ENCODE measurements at regions of chr4 and their contacts with region 1.

Region 1: GRCh38 chr4:5050520-5051277 is 581 bp upstream of the STK32B start:
- DNase-seq: no peak
- H3K4me3 ChIP-seq: peak overlapping the region; percentile 65
- CTCF ChIP-seq: peak; percentile 86

Region 2: GRCh38 chr4:4859390-4859842 is 191.3 kb before region 1 on chr4 and contains the start of gene MSX1:
- CTCF ChIA-PET with region 1: no interaction called
- POLR2A ChIA-PET with region 1: no interaction called
- DNase-seq: no peak
- H3K4me3 ChIP-seq: peak within 1 kb of the TSS; percentile 70
- CTCF ChIP-seq: no peak

Region 3: DNA sequence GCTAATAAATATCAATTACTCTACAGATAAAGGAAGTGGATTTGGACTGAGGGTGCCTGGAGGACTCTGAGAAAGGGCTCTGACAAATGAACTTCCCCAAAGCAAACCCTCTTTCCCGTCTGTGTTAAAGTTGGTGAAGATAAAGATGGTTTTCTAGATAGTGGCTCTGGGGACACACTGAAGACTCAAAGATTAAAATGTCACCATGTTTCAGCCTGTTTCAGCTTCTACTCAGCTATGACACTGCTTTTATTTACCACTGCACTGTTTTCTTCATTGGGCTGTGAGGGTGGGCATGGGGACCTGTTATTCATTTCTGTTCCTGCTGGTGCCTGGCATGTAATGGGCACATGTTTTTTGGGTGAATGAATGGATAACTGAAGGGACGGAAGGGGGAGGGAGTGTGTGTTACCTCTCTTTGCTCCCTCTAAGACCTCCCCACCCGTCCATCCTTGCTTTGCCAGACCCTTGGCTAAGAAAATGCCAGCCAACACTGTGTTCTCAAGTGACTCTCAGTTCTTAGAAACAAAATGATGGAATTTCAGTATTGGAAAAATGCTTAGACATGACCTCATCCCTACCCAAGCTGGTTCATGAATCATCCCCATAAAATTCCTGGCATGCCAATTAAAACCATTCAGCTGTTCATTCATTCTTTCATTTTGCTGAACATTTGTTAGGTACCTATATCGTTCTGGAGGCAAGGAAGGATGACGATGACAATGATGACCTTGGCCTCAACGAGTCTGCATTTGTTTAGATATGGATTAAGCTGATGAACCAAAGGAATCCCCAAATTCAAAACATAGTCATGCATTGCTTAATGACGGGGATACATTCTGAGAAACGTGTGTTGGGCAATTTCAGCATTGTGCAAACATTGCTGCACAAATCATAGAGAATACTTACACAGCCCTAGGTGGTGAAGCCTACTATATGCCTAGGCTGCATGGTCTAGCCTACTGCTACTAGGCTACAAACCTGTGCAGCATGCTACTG is 12.8 kb before region 1 on chr4:
- CTCF ChIA-PET with region 1: interaction called, 19 read pairs
- POLR2A ChIA-PET with region 1: interaction called, 4 read pairs
- DNase-seq: peak; percentile 96
- H3K4me3 ChIP-seq: no peak overlapping the region
- CTCF ChIP-seq: no peak

Region 4: DNA sequence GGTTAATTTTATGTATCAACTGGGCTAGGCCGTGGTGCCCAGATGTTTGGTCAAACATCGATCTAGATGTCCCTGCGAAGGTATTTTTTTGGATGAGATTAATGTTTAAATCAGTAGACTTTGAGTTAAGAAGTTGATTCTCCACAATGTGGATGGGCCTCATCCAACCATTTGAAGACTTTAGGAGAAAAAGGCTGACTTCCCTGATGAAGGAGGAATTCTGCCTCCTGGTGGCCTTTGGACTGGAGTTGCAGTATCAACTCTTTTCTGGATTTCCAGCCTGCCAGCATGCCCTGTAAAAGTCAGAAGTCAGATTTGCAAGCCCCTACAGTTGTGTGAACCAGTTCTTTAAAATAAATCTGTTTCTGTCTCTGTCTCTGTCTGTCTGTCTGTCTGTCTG is 92.0 kb after region 1 on chr4:
- CTCF ChIA-PET with region 1: interaction called, 20 read pairs
- POLR2A ChIA-PET with region 1: no interaction called
- DNase-seq: no peak
- H3K4me3 ChIP-seq: no peak overlapping the region
- CTCF ChIP-seq: peak; percentile 54

Region 5: GRCh38 chr4:5280828-5281227 is 230.1 kb after region 1 on chr4:
- CTCF ChIA-PET with region 1: no interaction called
- POLR2A ChIA-PET with region 1: no interaction called
- DNase-seq: no peak
- H3K4me3 ChIP-seq: no peak overlapping the region
- CTCF ChIP-seq: no peak

Region 6: DNA sequence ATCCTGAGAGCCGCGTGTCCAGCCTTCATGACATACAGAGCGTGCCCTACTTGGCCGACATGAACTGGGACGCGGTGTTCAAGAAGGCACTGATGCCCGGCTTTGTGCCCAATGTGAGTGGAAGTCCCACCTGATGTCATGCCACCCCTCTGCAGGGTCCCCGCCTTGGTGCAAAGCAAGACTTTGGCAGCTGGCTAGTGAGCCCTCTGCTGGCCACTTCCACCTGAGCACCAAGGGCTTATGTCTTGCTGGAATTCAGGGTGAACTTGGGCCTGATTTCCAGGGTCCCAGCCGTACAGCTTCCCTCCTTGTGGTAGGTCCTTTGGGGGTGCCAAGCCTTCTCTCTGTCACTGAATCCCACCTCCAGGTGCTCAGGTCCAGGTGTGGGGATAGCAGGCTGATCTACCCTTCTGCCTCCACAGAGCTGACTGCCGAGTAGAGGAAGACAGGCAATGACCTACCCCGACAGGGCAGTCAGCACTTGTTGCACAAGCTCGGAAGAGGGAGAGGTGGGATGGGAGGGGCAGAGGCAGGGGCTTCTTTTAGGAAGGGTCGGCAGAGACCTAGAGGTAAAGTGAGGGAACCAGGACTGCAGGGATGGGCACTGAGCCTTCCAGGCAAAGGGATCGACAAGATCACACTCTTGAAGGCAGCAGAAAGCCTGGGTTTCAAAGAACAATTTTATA is 409.6 kb after region 1 on chr4:
- CTCF ChIA-PET with region 1: interaction called, 25 read pairs
- POLR2A ChIA-PET with region 1: no interaction called
- DNase-seq: no peak
- H3K4me3 ChIP-seq: no peak overlapping the region
- CTCF ChIP-seq: peak; percentile 80

Region 7: GRCh38 chr4:5824635-5825034 is 773.9 kb after region 1 on chr4:
- CTCF ChIA-PET with region 1: interaction called, 11 read pairs
- POLR2A ChIA-PET with region 1: no interaction called
- DNase-seq: no peak
- H3K4me3 ChIP-seq: no peak overlapping the region
- CTCF ChIP-seq: peak; percentile 74

Measured in AG04449 (cell line).